ENCODE measurements at regions of chr13 and their contacts with region 1.

Region 1: GRCh38 chr13:41427666-41428065 is 29.7 kb upstream of the RGCC start:
- DNase-seq: no peak
- H3K4me3 Mint-ChIP-seq: peak overlapping the region; percentile 2
- H3K27ac Mint-ChIP-seq: no peak overlapping the region
- H3K4me1 Mint-ChIP-seq: peaks cover 4% of the 10 kb centered on the region
- H3K27me3 Mint-ChIP-seq: peaks cover 2% of the 10 kb centered on the region

Region 2: DNA sequence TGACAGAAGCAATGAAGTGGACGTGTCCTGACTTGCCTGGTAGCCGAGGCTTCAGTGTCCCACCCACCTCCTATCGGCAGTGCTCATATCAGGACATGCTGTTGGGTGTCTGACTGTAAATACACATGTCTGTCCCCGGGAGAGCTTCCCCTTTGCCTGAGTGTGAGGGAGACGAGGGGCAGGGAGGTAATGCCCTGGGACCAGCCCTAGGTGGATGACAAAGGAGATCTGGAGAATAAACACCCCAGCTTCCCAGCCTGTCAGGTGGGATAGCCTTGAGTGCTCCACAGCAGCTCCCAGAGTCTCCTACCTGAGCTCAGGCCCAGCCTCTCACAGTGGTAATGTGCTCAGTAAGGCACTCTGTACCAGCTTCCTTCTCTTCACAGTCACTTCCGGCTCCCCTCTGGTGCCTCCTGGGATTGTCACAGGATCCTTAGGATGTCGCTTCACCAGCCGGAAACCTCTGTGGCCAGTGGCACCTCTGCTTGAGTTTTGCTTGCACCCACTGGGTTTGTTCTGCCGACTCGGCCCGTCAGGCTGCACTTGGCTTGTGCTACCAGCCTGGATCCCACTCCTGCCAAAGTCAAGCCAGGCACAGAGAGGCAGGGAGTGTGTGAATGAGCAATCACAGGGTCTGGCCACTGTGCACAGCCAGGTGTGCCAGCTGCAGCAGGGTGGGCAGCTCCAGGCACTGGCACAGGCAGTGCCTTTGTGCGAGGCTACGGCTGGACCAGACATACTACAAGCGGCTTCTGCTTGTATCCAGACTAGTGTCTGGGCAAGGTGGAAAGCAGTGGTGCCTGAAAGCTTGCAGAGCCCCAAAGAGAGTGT is 24.8 kb before region 1 on chr13:
- intact Hi-C with region 1: loop called (anchors 1 kb)
- DNase-seq: peak; percentile 67
- H3K4me3 Mint-ChIP-seq: no peak overlapping the region
- H3K27ac Mint-ChIP-seq: no peak overlapping the region
- H3K4me1 Mint-ChIP-seq: no peaks in the 10 kb centered on the region
- H3K27me3 Mint-ChIP-seq: peaks cover 9% of the 10 kb centered on the region

Region 3: DNA sequence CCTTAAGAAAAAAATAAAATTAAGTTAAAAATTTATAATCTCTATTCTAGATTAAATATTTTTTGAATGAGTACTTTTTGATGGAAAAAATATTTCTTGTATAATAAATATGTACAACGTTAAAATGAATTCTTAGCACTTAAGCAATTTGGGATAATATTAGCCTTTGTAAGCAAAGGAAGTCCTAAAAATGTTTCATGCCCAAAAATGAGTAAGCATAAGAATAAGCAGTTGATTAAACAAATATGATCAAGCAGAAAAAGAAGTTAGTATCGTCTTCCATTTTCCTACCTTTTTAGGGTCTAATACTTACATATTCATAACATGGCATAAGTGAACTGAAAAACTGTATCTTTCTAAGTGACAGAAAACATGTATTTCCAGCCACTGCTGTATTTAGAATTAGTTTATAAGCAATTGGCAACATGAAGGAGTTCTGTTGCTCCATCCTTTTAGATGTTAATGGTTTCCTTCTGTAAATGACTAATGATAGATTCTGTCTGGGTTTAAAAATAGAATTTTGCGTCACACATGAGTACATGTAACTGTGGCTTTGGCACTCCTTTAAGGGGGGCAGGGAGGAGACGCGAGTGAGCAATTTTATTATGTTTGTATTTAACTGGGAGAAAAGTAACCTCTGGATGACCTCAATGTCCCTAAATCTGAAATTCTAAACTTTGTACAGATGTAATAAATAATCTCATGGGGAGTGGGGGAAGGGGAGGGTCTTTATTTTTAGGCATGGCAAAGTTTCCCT is 267.1 kb after region 1 on chr13:
- intact Hi-C with region 1: no loop called
- DNase-seq: no peak
- H3K4me3 Mint-ChIP-seq: no peak overlapping the region
- H3K27ac Mint-ChIP-seq: no peak overlapping the region
- H3K4me1 Mint-ChIP-seq: no peaks in the 10 kb centered on the region
- H3K27me3 Mint-ChIP-seq: no peaks in the 10 kb centered on the region

Measured in activated CD4-positive, alpha-beta T cell treated with anti-CD3 and anti-CD28 coated beads, Interleukin-2, amount 10 ng/mL, durations not matched to agents 24 days and 14 days (primary cell).